ENCODE measurements at regions of chrX and their contacts with region 1.

Region 1: DNA sequence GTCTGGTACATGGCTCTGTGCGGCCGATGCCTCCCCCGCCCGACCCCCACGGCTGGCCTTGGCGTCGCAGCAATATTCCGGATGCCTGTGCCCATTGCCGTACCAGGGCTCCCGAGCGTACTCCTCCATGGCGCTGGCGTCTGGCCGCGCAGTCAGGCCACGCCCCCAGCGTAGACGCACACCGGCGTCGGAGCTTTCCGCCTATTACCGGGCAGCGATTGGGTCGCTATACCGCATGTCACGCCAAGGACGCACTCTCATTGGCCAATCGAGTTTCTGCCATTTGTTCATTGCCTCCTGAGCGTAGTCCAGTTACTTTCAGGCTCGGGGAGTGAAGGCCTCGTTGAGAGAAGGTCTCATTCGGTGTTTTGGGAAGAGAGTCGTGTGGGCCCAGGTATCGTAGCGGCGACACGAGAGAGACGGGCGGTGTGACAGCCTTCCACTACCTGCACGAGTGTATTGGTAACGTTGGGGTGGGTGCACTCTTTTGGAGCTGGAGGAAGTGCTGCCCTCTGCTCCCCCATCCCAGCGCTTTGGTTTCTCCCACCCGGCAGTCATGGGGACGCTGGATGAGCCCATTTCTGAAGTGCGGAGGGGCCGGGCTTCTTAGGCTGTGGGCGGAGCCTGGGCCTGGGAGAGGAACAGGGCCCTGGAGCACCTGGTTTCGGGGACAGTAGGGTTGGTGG is at the starts of genes PQBP1 and TIMM17B:
- DNase-seq: peak; percentile 94
- H3K4me3 ChIP-seq: peak within 1 kb of the TSS; percentile 26 to 77 (median 59)
- H3K27ac ChIP-seq: peak within 1 kb of the TSS; percentile 78
- H3K4me1 ChIP-seq: no peaks in the 10 kb centered on the region
- H3K27me3 ChIP-seq: no peaks in the 10 kb centered on the region
- CTCF ChIP-seq: no peak
- total RNA-seq, gene PQBP1: 31.2 to 69.5 TPM
- total RNA-seq, gene TIMM17B: 28.0 to 53.2 TPM

Region 2: GRCh38 chrX:48801280-48802088 is 96.3 kb before region 1 on chrX and contains the start of gene HDAC6:
- CTCF ChIA-PET with region 1: no interaction called
- dilution Hi-C with region 1: no loop called
- in situ Hi-C with region 1: no loop called
- intact Hi-C with region 1: loop called (anchors 5 kb)
- DNase-seq: peak; percentile 98
- H3K4me3 ChIP-seq: peak within 1 kb of the TSS; percentile 55 to 84 (median 65)
- H3K27ac ChIP-seq: peak within 1 kb of the TSS; percentile 89
- H3K4me1 ChIP-seq: peaks cover 3% of the 10 kb centered on the region
- H3K27me3 ChIP-seq: no peaks in the 10 kb centered on the region
- CTCF ChIP-seq: no peak
- total RNA-seq, gene HDAC6: 33.5 to 40.6 TPM

Region 3: DNA sequence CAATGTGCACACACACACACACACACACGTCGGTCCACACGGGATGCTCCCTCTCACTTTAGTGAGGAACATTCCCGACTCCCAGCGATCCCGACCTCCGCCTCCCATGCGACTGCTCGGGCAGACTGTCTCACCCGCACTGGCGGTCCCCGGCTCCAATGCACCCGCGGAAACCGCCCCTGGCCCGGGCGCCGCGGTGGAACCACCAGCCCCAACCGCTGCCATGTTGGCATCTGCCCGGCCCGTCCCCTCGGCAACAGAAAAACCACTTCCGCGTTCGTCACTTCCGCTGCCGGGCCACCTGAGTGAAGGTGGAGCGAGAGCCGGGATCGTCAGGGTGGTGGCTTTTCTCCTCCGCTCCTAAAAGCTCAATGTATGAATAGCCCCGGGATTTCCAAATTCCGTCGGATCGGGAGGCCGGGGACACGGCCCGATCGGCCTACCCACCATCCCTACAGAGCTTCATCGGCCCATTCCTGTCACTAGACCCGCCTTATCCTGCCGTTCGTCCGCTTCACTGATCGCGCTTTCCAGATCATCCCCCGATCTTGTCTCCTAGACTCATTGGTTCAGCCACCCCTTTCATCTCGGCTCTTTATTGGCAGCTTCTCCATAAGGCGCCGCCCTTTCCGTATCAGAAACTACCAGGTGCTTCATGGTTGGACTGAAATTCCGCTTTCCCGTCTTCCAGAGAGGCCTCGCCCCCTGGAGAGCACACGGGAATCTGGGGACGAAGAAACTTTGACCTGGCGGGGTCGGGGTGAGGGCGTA is 13.8 kb after region 1 on chrX and contains the start of gene SLC35A2:
- CTCF ChIA-PET with region 1: no interaction called
- dilution Hi-C with region 1: no loop called
- in situ Hi-C with region 1: no loop called
- intact Hi-C with region 1: loop called (anchors 2 kb)
- DNase-seq: peak; percentile 80
- H3K4me3 ChIP-seq: peak within 1 kb of the TSS; percentile 59 to 77 (median 73)
- H3K27ac ChIP-seq: peak within 1 kb of the TSS; percentile 72
- H3K4me1 ChIP-seq: no peaks in the 10 kb centered on the region
- H3K27me3 ChIP-seq: no peaks in the 10 kb centered on the region
- CTCF ChIP-seq: no peak
- total RNA-seq, gene SLC35A2: 26.2 to 39.9 TPM

Measured in mammary epithelial cell (primary cell).